ENCODE measurements at regions of chr2 and their contacts with region 1.

Region 1: GRCh38 chr2:108565778-108566375 is 31.6 kb downstream of the LIMS1 start:
- DNase-seq: no peak

Region 2: DNA sequence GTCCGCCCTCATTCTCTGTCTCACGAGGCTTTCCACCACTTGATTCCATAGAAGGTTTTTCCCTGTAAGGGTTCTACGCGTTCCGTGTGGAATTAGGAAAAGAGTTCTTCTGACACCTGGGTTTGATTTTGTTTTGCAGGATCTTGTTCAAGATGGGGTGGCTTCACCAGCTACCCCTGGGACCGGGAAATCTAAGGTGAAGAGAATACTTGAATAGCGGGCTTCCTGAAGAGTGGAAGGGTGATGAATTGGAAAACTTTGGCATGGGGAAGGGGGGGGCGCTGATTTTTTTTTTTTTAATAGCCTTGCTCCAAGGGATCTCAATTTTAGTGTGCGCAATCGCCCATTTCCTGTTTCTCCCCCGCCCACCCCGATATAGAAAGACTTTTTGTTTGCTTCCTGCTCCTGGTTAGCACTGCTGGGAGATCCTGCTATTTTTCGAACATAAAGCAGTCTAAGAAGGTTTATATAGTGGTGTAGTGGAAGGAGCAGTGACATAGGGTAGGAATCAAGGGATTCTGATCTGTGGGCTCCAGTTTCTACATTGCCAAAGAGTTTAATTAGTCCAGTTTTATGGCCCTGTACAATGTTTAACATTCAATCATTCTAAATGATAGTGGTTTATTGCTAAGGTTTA is 116.3 kb before region 1 on chr2:
- in situ Hi-C with region 1: loop called (anchors 25 kb)
- DNase-seq: no peak

Region 3: DNA sequence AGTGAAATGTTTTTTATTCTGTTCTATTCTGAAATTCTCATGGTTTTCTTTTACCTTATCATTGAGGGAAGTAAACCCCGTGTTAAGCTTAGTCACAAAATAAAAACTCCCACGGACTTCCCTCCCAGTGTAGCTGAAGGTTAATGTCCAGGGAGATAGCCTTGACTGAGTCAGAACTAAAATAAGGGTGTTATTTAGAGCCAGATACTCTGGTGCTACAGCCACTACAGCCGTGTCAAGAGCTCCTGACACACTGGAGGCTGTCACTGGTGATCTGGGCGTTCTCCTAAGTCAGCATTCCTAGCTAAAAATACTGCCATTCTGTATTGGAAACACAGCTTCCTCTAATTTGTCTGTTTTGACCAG is 71.4 kb after region 1 on chr2:
- in situ Hi-C with region 1: no loop called
- DNase-seq: no peak